ENCODE measurements at regions of chr15 and their contacts with region 1.

Region 1: DNA sequence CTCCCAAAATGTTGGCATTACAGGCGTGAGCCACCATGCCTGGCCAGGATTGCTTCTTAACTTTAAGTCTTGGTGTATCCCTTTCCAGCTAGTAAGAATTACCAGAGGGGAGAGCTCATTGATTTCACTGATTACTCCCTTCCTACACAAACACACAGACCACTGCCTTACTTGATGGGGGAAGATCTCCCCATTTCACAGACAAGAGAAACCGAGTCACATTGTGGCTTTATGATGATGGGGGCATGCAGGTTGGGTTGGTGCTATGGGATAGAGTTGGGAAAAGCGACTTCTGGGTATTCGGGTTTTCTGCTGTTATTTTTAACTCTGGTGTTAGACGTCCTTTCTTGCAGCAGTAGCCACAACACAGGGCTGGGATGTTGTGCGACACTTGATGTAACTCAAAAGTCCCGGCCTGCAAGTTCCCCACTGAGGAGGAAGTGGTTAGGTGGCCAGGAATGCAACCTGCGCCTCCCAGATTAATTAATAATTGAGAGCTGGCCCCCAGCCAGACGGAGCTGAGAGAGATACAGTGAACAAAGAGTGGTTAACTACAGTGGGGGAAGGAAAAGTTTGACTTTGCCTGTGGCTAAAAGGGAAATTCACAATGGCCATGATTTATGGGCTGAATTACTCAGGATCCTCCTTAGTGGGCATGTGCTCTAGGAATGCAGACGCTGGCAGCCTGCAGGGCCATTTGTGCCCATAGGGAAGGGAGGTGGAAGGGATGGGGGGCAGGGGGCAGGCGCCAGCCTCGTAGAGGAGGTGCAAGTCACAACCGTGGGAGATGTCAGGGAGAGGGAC is 63.6 kb downstream of the SMAD6 start:
- DNase-seq: no peak
- ATAC-seq: no peak
- H3K4me3 ChIP-seq: no peak overlapping the region
- H3K27ac ChIP-seq: peak overlapping the region; percentile 28
- H3K4me1 ChIP-seq: peaks cover 65% of the 10 kb centered on the region
- H3K27me3 ChIP-seq: no peaks in the 10 kb centered on the region
- CTCF ChIP-seq: no peak
- POLR2A ChIP-seq: no peak
- RAD21 ChIP-seq: no peak

Region 2: DNA sequence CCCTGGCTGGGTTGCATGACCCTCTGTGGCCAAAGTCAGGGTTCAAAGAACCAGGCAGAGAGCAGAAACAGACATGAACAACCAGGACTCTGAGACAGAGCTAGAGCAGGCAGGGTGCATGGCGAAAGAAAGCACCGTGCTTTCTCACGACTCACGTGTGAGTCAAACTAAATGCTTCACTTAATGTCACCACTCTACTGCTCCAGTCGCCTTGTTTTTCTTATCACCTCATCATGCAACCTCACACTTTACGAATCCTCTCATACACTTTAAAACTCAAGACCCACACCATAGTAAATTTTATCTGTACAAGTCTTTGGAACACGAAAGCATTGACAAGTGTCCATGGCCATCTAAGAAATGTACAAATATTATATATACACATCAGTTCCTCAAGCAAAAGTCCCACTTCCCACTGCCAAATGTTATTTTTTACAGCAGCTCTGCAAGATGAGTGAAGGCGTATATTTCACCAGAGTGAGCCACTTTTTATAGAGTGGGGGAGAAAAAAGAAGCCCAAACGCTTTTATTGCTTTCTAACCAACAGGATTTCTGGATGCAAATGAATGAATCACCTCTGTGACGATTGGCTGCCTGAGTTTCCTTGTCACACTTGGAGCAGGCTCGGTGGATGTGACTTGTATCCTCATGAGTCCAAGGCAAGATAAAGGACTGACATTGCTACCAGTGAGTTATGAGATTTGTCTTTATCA is 496.2 kb before region 1 on chr15:
- CTCF ChIA-PET with region 1: no interaction called
- POLR2A ChIA-PET with region 1: no interaction called
- dilution Hi-C with region 1: no loop called
- in situ Hi-C with region 1: no loop called
- intact Hi-C with region 1: no loop called
- DNase-seq: peak; percentile 71
- ATAC-seq: peak; percentile 81
- H3K4me3 ChIP-seq: no peak overlapping the region
- H3K27ac ChIP-seq: no peak overlapping the region
- H3K4me1 ChIP-seq: no peaks in the 10 kb centered on the region
- H3K27me3 ChIP-seq: peaks cover 30% of the 10 kb centered on the region
- CTCF ChIP-seq: no peak
- POLR2A ChIP-seq: no peak
- RAD21 ChIP-seq: no peak

Region 3: GRCh38 chr15:66619151-66619903 is 146.4 kb before region 1 on chr15:
- CTCF ChIA-PET with region 1: no interaction called
- POLR2A ChIA-PET with region 1: no interaction called
- dilution Hi-C with region 1: no loop called
- in situ Hi-C with region 1: loop called (anchors 5 kb)
- intact Hi-C with region 1: loop called (anchors 5 kb)
- DNase-seq: peak; percentile 68
- ATAC-seq: peak; percentile 92
- H3K4me3 ChIP-seq: no peak overlapping the region
- H3K27ac ChIP-seq: no peak overlapping the region
- H3K4me1 ChIP-seq: peaks cover 15% of the 10 kb centered on the region
- H3K27me3 ChIP-seq: no peaks in the 10 kb centered on the region
- CTCF ChIP-seq: peak; percentile 94
- POLR2A ChIP-seq: no peak
- RAD21 ChIP-seq: peak; percentile 85

Region 4: GRCh38 chr15:66747886-66748707 is 17.6 kb before region 1 on chr15:
- CTCF ChIA-PET with region 1: no interaction called
- POLR2A ChIA-PET with region 1: no interaction called
- dilution Hi-C with region 1: no loop called
- in situ Hi-C with region 1: no loop called
- intact Hi-C with region 1: loop called (anchors 2 kb)
- DNase-seq: peak; percentile 85
- ATAC-seq: peak; percentile 72
- H3K4me3 ChIP-seq: no peak overlapping the region
- H3K27ac ChIP-seq: peak overlapping the region; percentile 95
- H3K4me1 ChIP-seq: peaks cover 65% of the 10 kb centered on the region
- H3K27me3 ChIP-seq: no peaks in the 10 kb centered on the region
- CTCF ChIP-seq: no peak
- POLR2A ChIP-seq: no peak
- RAD21 ChIP-seq: no peak

Region 5: GRCh38 chr15:66780172-66780972 is 14.7 kb after region 1 on chr15:
- CTCF ChIA-PET with region 1: no interaction called
- POLR2A ChIA-PET with region 1: no interaction called
- dilution Hi-C with region 1: no loop called
- in situ Hi-C with region 1: no loop called
- intact Hi-C with region 1: no loop called
- DNase-seq: peak; percentile 93
- ATAC-seq: peak; percentile 88
- H3K4me3 ChIP-seq: no peak overlapping the region
- H3K27ac ChIP-seq: peak overlapping the region; percentile 67
- H3K4me1 ChIP-seq: peaks cover 53% of the 10 kb centered on the region
- H3K27me3 ChIP-seq: no peaks in the 10 kb centered on the region
- CTCF ChIP-seq: no peak
- POLR2A ChIP-seq: no peak
- RAD21 ChIP-seq: peak; percentile 32